Activated B cell treated with CpG ODN at 0.5 μM for 24 hours (primary cell): ENCODE measurements at regions of chr20 and their contacts with region 1.

Region 1: GRCh38 chr20:23441850-23442313 is 2.4 kb downstream of the CSTL1 start:
- DNase-seq: peak; percentile 24
- ATAC-seq: peak; percentile 61
- H3K4me3 Mint-ChIP-seq: no peak overlapping the region
- H3K27ac Mint-ChIP-seq: no peak overlapping the region
- H3K4me1 Mint-ChIP-seq: no peaks in the 10 kb centered on the region
- H3K27me3 Mint-ChIP-seq: peaks cover 5% of the 10 kb centered on the region
- CTCF ChIP-seq: peak; percentile 57

Region 2: DNA sequence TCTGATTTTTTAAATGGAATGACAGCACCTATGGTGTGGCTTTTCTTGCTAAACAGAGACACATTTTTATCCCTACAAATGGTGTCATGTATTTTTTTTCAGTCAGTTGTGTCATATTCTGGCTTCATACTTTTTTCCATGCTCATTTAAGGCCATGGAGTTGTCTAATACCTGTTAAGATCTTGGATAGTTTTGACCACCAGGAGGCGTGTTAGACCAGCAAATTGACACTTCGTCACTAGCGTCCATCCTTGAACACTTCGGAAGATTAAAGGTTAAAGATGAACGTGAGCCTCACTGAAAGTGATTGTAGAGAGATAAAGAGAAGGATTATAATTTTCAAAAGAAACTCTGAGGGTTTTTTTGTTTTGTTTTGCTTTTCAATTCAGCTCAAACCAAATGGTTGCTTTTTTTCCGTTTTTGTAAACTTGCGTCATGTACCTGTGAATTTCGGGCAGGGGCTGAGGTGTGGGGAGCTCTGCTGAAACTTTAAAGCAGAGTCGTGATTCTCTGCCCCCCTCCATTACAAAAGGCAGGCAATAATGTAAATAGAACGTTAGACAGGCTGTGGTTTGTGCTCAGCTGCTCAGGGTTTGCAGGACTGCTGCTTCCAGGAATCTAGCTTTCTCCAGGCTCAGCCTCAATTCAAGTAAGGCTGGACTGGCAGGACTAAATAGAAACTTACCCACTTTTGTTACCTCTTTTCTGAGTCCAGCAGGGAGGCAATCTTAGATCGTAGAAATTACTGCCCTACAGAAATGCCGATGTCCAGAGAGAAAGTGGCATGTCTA is 1102.6 kb before region 1 on chr20:
- CTCF ChIA-PET with region 1: no interaction called
- POLR2A ChIA-PET with region 1: no interaction called
- intact Hi-C with region 1: loop called (anchors 5 kb)
- DNase-seq: no peak
- ATAC-seq: no peak
- H3K4me3 Mint-ChIP-seq: no peak overlapping the region
- H3K27ac Mint-ChIP-seq: no peak overlapping the region
- H3K4me1 Mint-ChIP-seq: no peaks in the 10 kb centered on the region
- H3K27me3 Mint-ChIP-seq: peaks cover 10% of the 10 kb centered on the region
- CTCF ChIP-seq: no peak

Region 3: GRCh38 chr20:23340524-23340923 is 101.4 kb before region 1 on chr20:
- CTCF ChIA-PET with region 1: no interaction called
- POLR2A ChIA-PET with region 1: no interaction called
- intact Hi-C with region 1: no loop called
- DNase-seq: no peak
- ATAC-seq: no peak
- H3K4me3 Mint-ChIP-seq: no peak overlapping the region
- H3K27ac Mint-ChIP-seq: no peak overlapping the region
- H3K4me1 Mint-ChIP-seq: no peaks in the 10 kb centered on the region
- H3K27me3 Mint-ChIP-seq: peaks cover 1% of the 10 kb centered on the region
- CTCF ChIP-seq: no peak

Region 4: GRCh38 chr20:23407781-23408464 is 34.0 kb before region 1 on chr20:
- CTCF ChIA-PET with region 1: no interaction called
- POLR2A ChIA-PET with region 1: no interaction called
- intact Hi-C with region 1: loop called (anchors 1 kb)
- DNase-seq: no peak
- ATAC-seq: peak; percentile 97
- H3K4me3 Mint-ChIP-seq: peak overlapping the region; percentile 28
- H3K27ac Mint-ChIP-seq: peak overlapping the region; percentile 79
- H3K4me1 Mint-ChIP-seq: peaks cover 23% of the 10 kb centered on the region
- H3K27me3 Mint-ChIP-seq: no peaks in the 10 kb centered on the region
- CTCF ChIP-seq: no peak

Region 5: GRCh38 chr20:23995905-23996666 is 554.2 kb after region 1 on chr20:
- CTCF ChIA-PET with region 1: interaction called, 4 read pairs
- POLR2A ChIA-PET with region 1: no interaction called
- intact Hi-C with region 1: loop called (anchors 5 kb)
- DNase-seq: peak; percentile 27
- ATAC-seq: no peak
- H3K4me3 Mint-ChIP-seq: no peak overlapping the region
- H3K27ac Mint-ChIP-seq: no peak overlapping the region
- H3K4me1 Mint-ChIP-seq: no peaks in the 10 kb centered on the region
- H3K27me3 Mint-ChIP-seq: peaks cover 2% of the 10 kb centered on the region
- CTCF ChIP-seq: peak; percentile 52